Calu3 (cell line): ENCODE measurements at regions of chrX and their contacts with region 1.

Region 1: DNA sequence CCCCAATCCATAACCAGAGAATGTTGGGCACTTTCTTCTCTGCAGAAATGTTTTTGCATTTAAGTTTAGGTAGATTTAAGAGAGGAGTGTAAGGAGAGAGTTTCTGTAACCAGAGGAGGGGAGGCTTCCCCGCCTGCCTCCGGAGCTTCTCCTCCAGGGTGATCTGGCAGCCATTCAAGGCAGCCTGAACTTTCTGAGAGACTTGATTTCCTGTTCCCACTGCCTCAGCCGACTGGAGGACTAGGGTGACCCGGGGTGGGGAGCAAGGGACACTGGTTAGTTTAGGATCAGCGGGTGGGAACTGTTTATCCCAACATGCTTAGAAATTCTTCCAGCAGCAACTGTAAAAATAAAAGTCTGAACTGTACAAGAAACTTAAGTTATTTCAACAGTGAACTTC is 15.1 kb downstream of the FAM9C start:
- DNase-seq: peak; percentile 59
- H3K4me3 Mint-ChIP-seq: peak overlapping the region; percentile 36
- H3K27ac Mint-ChIP-seq: peak overlapping the region; percentile 95
- H3K4me1 Mint-ChIP-seq: peaks cover 48% of the 10 kb centered on the region
- H3K27me3 Mint-ChIP-seq: no peaks in the 10 kb centered on the region
- CTCF ChIP-seq: no peak

Region 2: DNA sequence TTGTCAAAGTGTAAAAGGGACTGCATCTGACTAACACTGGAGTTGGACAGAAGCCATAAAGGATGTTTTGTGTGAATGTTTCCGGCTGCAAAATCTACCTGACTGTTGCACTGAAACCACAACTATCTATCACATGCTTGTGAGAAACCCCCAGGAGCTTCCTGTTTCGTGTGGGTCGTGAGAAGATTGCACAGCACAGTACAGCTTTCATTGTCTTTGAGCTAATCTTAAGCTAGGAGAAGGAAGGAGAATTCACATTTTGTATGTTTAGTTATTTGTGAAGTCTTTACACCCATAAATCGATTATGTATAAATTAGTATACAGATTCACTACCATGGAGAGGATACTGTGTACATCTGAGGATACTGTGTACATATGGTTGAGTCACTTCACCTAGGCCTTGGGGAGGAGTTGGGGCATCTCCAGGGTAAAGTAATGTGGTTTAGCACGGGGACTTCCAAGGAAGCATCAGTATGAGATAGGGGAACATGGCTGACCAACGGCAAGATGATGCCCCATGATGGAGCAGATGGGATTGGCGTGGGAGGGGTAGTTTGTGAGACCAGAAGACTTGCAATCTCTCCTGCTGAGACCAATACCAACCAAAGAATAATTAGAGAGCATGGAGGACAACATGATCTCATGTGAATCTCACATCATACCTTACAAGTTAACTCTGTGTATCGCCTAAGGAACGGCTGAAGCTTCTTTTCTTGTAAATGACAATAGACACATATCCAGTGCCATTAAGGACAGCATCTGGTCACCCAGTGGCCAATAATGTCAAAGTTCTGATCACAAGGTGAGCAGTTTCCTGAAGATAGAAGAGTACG is 58.2 kb after region 1 on chrX:
- CTCF ChIA-PET with region 1: no interaction called
- intact Hi-C with region 1: loop called (anchors 10 kb)
- DNase-seq: peak; percentile 50
- H3K4me3 Mint-ChIP-seq: no peak overlapping the region
- H3K27ac Mint-ChIP-seq: peak overlapping the region; percentile 95
- H3K4me1 Mint-ChIP-seq: peaks cover 25% of the 10 kb centered on the region
- H3K27me3 Mint-ChIP-seq: no peaks in the 10 kb centered on the region
- CTCF ChIP-seq: no peak